ENCODE measurements at regions of chr19 and their contacts with region 1.

Region 1: GRCh38 chr19:43526884-43527859 is at the start of gene ETHE1:
- DNase-seq: peak; percentile 76
- H3K4me3 Mint-ChIP-seq: peak within 1 kb of the TSS; percentile 84
- H3K27ac Mint-ChIP-seq: peak within 1 kb of the TSS; percentile 88
- H3K4me1 Mint-ChIP-seq: peaks cover 26% of the 10 kb centered on the region
- H3K27me3 Mint-ChIP-seq: no peaks in the 10 kb centered on the region
- CTCF ChIP-seq: no peak
- total RNA-seq, gene ETHE1: 78.0 and 94.4 TPM in 2 replicates

Region 2: DNA sequence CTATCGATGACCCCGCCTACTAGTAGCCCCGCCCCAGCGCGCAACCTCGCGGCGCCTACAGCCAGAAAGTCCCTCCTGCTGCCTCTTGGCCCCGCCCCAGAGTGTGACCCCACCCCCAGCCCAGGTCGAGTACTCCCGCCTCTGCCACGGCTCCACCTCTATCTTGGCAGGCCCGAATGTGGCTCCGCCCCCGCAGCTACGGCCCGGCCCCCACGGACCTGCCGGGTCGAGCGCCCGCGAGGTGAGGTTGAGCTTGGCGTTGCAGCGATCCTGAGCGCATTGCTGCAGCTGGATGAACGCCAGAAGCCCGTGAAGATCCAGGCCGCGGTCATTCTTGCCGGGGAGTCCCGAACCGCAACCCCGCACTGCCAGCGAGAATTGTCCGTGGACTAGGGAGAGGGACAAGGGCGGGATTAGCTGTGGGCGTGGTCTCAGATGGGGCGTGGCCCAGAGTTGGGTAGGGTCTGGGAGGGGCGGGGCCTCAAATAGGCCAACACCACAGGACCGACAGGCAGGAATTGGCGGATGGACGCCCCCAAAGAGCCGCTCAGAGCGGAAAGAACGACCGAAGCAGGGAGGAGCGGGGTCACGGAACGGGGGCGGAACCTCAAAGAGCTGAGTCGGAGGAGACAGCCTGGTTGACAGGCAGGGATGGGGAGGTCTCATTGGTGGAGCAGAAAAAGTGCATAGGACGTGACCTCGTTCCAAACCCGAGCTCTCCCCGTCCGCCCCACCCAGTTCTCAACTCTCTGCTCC is 63.6 kb before region 1 on chr19:
- CTCF ChIA-PET with region 1: no interaction called
- POLR2A ChIA-PET with region 1: interaction called, 16 read pairs
- intact Hi-C with region 1: no loop called
- DNase-seq: peak; percentile 97
- H3K4me3 Mint-ChIP-seq: peak overlapping the region; percentile 88
- H3K27ac Mint-ChIP-seq: peak overlapping the region; percentile 80
- H3K4me1 Mint-ChIP-seq: peaks cover 45% of the 10 kb centered on the region
- H3K27me3 Mint-ChIP-seq: no peaks in the 10 kb centered on the region
- CTCF ChIP-seq: no peak

Region 3: DNA sequence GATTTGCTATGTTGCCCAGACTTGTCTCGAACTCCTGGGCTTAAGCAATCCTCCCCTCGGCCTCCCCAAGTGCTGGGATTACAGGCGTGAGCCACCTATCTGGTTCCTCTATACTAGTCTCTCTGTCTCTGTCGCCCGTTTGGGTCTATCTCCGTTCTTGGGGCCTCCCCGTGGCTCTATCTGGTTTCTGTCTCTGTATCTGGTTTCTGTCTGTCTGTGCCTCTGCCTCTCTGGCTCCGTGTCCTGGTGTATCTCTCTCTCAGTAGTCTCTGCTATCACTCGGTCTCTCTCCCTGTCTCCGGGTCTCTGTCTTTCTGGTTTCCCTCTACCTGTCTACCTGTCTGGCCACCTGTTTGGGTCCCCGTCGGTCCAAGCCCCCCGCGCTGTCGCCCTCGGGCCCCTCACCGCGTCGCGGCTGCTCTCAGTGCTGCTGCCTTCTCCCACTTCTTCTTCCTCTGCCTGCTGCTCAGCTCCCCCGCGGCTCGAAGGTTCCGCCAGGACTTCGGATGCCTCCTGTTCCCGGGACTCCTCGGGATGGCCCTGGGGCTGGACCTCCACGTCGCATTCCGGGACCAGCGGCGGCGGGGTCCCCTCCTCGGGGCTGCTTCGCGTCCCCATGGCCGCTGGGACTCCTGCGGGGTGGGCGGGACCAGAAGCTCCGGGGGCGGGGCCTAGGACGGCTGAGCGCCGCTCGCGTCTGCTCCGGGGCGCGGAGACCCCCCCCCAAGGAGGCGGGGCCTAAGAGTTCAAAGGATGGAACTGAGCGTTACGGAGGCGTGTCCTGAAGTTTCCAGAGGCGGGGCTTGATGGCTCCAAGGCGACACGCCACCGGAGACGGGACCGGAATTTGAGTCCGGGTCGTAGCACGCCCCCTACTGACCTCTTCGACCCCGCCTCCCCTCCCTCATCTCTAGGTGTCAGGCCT is 23.4 kb before region 1 on chr19:
- CTCF ChIA-PET with region 1: interaction called, 3 read pairs
- POLR2A ChIA-PET with region 1: interaction called, 17 read pairs
- intact Hi-C with region 1: no loop called
- DNase-seq: peak; percentile 94
- H3K4me3 Mint-ChIP-seq: peak overlapping the region; percentile 90
- H3K27ac Mint-ChIP-seq: peak overlapping the region; percentile 87
- H3K4me1 Mint-ChIP-seq: peaks cover 11% of the 10 kb centered on the region
- H3K27me3 Mint-ChIP-seq: no peaks in the 10 kb centered on the region
- CTCF ChIP-seq: no peak

Region 4: GRCh38 chr19:43562698-43563241 is 35.6 kb after region 1 on chr19:
- CTCF ChIA-PET with region 1: no interaction called
- POLR2A ChIA-PET with region 1: no interaction called
- intact Hi-C with region 1: loop called (anchors 1 kb)
- DNase-seq: peak; percentile 86
- H3K4me3 Mint-ChIP-seq: no peak overlapping the region
- H3K27ac Mint-ChIP-seq: no peak overlapping the region
- H3K4me1 Mint-ChIP-seq: peaks cover 6% of the 10 kb centered on the region
- H3K27me3 Mint-ChIP-seq: no peaks in the 10 kb centered on the region
- CTCF ChIP-seq: no peak

Region 5: DNA sequence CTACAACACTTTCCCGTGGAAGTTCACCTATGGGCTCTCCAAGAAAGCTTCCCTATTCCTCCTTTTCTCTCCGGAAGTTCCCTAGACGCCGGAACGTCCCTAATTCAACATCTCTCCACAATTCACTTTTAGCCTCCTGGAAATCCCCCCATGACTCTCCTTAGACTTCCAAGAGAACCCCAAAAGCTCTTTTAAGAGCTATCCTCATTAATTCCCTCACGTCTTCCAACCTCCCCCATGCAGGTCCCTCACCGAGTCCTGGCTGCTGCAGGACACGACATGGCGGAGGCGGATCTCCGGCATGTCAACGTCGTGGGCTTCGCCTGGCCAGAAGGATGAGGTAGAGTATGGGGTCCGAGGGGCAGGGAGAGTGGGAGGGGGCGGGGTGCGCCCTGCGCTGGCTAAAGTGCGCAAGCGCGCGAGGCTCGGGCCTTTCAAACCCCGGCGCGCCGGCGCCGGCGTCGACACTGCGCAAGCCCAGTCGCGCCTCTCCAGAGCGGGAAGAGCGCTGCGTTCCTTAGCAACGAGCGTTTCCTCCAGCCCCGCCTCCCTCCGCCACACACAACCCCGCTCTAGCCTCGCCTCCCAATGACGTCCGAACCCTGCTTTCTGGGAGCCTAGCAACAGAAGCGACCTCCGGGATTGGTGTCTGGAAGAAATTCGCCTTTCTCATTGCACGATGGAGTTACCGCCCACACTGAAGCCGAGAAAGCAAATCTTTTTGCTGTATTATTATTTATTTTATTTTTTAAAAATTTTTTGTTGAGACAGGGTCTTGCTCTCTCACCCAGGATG is 48.2 kb after region 1 on chr19 and contains the starts of genes PINLYP and XRCC1:
- CTCF ChIA-PET with region 1: interaction called, 4 read pairs
- POLR2A ChIA-PET with region 1: interaction called, 19 read pairs
- intact Hi-C with region 1: no loop called
- DNase-seq: peak; percentile 99
- H3K4me3 Mint-ChIP-seq: peak within 1 kb of the TSS; percentile 98
- H3K27ac Mint-ChIP-seq: peak within 1 kb of the TSS; percentile 98
- H3K4me1 Mint-ChIP-seq: peaks cover 12% of the 10 kb centered on the region
- H3K27me3 Mint-ChIP-seq: peaks cover 14% of the 10 kb centered on the region
- CTCF ChIP-seq: no peak
- total RNA-seq, gene PINLYP: 0.74 TPM in 1 of 2 replicates, not detected in the other
- total RNA-seq, gene XRCC1: 18.0 and 20.6 TPM in 2 replicates